A673 (cell line): ENCODE measurements at regions of chr9 and their contacts with region 1.

Region 1: DNA sequence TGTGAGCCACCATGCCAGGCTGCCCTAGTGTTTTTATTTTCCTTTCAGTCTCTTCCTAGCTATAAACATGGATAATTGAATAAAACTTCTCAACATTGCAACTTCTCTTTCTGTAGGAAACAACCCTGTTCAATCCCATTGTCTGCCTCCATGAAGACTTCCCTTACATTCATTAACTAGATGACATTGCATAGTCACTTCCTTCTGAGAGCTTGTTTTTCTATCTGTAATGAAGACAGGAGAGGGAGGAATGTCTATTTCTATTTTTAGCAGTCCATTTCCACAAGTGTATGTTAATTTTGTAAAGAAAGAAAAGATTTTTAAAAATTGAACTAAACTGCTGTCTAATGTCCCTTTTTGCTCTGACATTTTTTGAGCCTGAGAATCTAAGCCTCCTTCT is 55.6 kb upstream of the MELK start:
- DNase-seq: no peak
- H3K4me3 ChIP-seq: no peak overlapping the region
- H3K27ac ChIP-seq: no peak overlapping the region
- H3K4me1 ChIP-seq: no peaks in the 10 kb centered on the region
- H3K27me3 ChIP-seq: no peaks in the 10 kb centered on the region
- CTCF ChIP-seq: no peak

Region 2: GRCh38 chr9:36102742-36103495 is 414.2 kb before region 1 on chr9:
- CTCF ChIA-PET with region 1: no interaction called
- POLR2A ChIA-PET with region 1: no interaction called
- intact Hi-C with region 1: no loop called
- DNase-seq: peak; percentile 85
- H3K4me3 ChIP-seq: no peak overlapping the region
- H3K27ac ChIP-seq: no peak overlapping the region
- H3K4me1 ChIP-seq: no peaks in the 10 kb centered on the region
- H3K27me3 ChIP-seq: no peaks in the 10 kb centered on the region
- CTCF ChIP-seq: peak; percentile 92

Region 3: GRCh38 chr9:37449862-37450632 is 932.9 kb after region 1 on chr9:
- CTCF ChIA-PET with region 1: no interaction called
- POLR2A ChIA-PET with region 1: interaction called, 10 read pairs
- intact Hi-C with region 1: no loop called
- DNase-seq: peak; percentile 97
- H3K4me3 ChIP-seq: peak overlapping the region; percentile 22
- H3K27ac ChIP-seq: peak overlapping the region; percentile 95
- H3K4me1 ChIP-seq: peaks cover 42% of the 10 kb centered on the region
- H3K27me3 ChIP-seq: no peaks in the 10 kb centered on the region
- CTCF ChIP-seq: peak; percentile 35